ENCODE measurements at regions of chr15 and their contacts with region 1.

Region 1: DNA sequence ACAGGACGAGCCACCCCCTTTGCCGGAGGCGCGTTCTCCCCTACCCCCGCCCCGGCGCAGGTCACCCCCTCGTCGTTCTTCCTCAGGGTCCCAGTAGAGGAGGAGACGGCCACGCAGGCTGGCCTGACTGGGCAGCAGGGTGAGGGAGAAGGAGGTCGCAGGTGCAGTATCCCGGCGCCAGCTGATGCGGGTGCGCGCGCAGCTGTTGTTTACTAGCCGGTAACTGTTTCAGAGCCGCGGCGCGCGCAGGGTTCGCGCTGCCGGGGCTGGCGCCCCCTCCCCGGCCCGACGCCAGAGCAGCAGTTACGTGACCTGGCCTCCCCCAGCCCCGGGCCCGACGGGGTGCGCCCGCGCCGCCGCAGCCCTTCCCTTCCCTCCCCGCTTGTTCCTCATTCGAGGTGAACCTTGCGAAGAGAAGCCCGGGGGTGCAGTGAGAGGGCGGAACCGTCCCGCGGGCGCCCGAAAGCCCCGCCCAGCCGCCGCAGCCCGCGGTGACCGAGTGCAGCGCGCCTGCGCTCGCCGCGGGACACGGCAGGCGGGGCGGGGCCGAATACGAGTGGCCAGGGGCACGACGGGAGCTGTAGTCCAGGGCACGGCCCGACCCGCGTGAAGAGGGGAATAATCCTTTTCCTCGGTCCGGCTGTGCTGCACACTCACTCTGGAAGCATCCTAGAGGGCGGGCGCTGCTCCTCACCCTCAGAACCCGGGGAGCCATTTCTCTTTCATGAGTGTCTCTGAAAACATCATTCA is at the start of gene SLC12A6:
- DNase-seq: peak; percentile 95
- ATAC-seq: peak; percentile 82
- H3K4me3 Mint-ChIP-seq: peak within 1 kb of the TSS; percentile 83
- H3K27ac Mint-ChIP-seq: peak within 1 kb of the TSS; percentile 97
- H3K4me1 Mint-ChIP-seq: peaks cover 67% of the 10 kb centered on the region
- H3K27me3 Mint-ChIP-seq: no peaks in the 10 kb centered on the region
- total RNA-seq, gene SLC12A6: 18.2 to 22.1 TPM

Region 2: GRCh38 chr15:33660151-33660550 is 677.6 kb before region 1 on chr15:
- CTCF ChIA-PET with region 1: no interaction called
- POLR2A ChIA-PET with region 1: no interaction called
- intact Hi-C with region 1: no loop called
- DNase-seq: no peak
- ATAC-seq: no peak
- H3K4me3 Mint-ChIP-seq: no peak overlapping the region
- H3K27ac Mint-ChIP-seq: no peak overlapping the region
- H3K4me1 Mint-ChIP-seq: no peaks in the 10 kb centered on the region
- H3K27me3 Mint-ChIP-seq: peaks cover 6% of the 10 kb centered on the region

Region 3: GRCh38 chr15:34241372-34242330 is 96.1 kb before region 1 on chr15:
- CTCF ChIA-PET with region 1: interaction called, 17 read pairs
- POLR2A ChIA-PET with region 1: interaction called, 4 read pairs
- intact Hi-C with region 1: loop called (anchors 1 to 2 kb)
- DNase-seq: peak; percentile 35
- ATAC-seq: peak; percentile 68
- H3K4me3 Mint-ChIP-seq: no peak overlapping the region
- H3K27ac Mint-ChIP-seq: peak overlapping the region; percentile 39
- H3K4me1 Mint-ChIP-seq: peaks cover 33% of the 10 kb centered on the region
- H3K27me3 Mint-ChIP-seq: no peaks in the 10 kb centered on the region

Region 4: DNA sequence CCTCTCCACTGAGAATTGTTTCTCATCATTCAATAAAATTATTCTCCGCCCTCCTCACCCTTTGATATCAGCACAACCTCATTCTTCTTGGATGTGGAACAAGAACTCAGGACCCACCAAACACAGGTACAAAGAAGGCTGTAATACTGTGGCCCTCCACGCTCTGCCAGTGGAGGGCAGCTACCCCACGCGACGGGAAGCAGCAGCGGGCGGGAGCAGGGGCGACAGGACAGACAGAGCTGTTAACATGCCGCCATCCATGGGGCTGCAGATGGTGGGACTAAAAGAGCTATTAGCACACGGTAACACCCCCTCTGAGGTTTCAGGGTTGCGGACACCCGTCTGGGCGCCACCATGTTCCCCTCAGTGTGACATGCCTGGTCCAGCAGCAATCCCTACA is 75.4 kb before region 1 on chr15:
- CTCF ChIA-PET with region 1: no interaction called
- POLR2A ChIA-PET with region 1: no interaction called
- intact Hi-C with region 1: no loop called
- DNase-seq: no peak
- ATAC-seq: no peak
- H3K4me3 Mint-ChIP-seq: no peak overlapping the region
- H3K27ac Mint-ChIP-seq: no peak overlapping the region
- H3K4me1 Mint-ChIP-seq: peaks cover 10% of the 10 kb centered on the region
- H3K27me3 Mint-ChIP-seq: no peaks in the 10 kb centered on the region